ENCODE measurements at regions of chr11 and their contacts with region 1.

Region 1: DNA sequence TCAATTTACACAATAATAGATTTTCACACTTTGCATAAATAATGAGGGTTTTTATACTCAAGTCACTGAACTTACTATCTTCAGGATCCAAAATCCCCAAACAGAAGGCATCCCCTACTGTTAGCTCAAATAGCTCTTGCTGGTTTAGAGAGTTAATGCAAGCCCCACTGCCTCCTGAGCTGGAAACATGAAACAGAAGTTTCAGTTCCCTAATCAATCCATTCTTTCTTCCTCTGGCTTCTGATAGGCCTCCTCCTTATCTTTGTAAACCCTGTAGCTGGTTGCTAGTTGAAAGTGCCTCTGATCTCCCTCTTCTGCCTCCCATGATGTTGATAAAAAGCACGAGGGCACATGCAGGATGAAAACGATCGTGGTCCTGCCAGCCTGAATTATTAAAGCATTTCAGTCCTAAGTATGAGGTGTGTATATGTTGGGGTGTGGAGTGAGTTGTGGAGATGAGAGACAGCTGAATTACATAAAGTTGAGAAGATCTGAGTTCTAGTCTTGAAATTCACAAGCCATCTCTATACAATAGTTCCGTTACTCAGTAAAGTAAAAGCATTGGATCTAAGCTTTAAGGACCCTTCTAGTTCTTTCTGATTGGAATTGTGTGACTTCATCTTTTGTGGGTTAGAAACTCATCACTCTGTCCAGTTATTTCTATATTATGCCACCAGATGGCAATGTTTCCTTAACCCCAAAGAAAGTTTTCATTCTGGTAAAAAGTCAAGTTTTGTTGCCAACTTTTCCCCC is 35.0 kb upstream of the EHF start:
- DNase-seq: peak; percentile 38 to 71 (median 50)
- ATAC-seq: peak; percentile 70
- H3K4me3 ChIP-seq: no peak overlapping the region
- H3K27ac ChIP-seq: peak overlapping the region; percentile 44; the same call in 2 of the 3 replicates
- H3K4me1 ChIP-seq: peaks cover 0 to 40% of the 10 kb centered on the region in 2 experiments; a peak in 3 of 5 replicates
- H3K27me3 ChIP-seq: peaks cover 0 to 3% of the 10 kb centered on the region in 2 experiments; a peak in 3 of 5 replicates
- CTCF ChIP-seq: peak; percentile 59 to 83 (median 65); a peak in 5 of 6 replicates
- EP300 ChIP-seq: peak; percentile 17; the same call in 1 of the 2 replicates
- POLR2A ChIP-seq: no peak
- RAD21 ChIP-seq: peak; percentile 96 to 97

Region 2: GRCh38 chr11:34565417-34566207 is 20.3 kb before region 1 on chr11:
- CTCF ChIA-PET with region 1: no interaction called
- POLR2A ChIA-PET with region 1: interaction called, 3 read pairs
- in situ Hi-C with region 1: no loop called
- intact Hi-C with region 1: loop called (anchors 1 kb)
- DNase-seq: peak; percentile 52 to 62 (median 57)
- ATAC-seq: peak; percentile 88
- H3K4me3 ChIP-seq: no peak overlapping the region
- H3K27ac ChIP-seq: no peak overlapping the region
- H3K4me1 ChIP-seq: no peaks in the 10 kb centered on the region
- H3K27me3 ChIP-seq: peaks cover 2 to 9% of the 10 kb centered on the region in 2 experiments; a peak in 2 of 5 replicates
- CTCF ChIP-seq: peak; percentile 64 to 74 (median 69)
- EP300 ChIP-seq: no peak
- POLR2A ChIP-seq: no peak
- RAD21 ChIP-seq: peak; percentile 47 to 80

Region 3: GRCh38 chr11:34600339-34601084 is 14.6 kb after region 1 on chr11:
- CTCF ChIA-PET with region 1: interaction called, 3 read pairs
- POLR2A ChIA-PET with region 1: no interaction called
- in situ Hi-C with region 1: no loop called
- intact Hi-C with region 1: loop called (anchors 2 kb)
- DNase-seq: peak; percentile 86 to 93 (median 88)
- ATAC-seq: peak; percentile 82
- H3K4me3 ChIP-seq: no peak overlapping the region
- H3K27ac ChIP-seq: peak overlapping the region; percentile 71
- H3K4me1 ChIP-seq: peaks cover 41 to 63% of the 10 kb centered on the region in 2 experiments
- H3K27me3 ChIP-seq: no peaks in the 10 kb centered on the region
- CTCF ChIP-seq: peak in 1 of 3 experiments; percentile 10; a peak in 1 of 6 replicates
- EP300 ChIP-seq: peak; percentile 92
- POLR2A ChIP-seq: no peak
- RAD21 ChIP-seq: peak in 1 of 2 experiments; percentile 33; a peak in 1 of 4 replicates

Region 4: DNA sequence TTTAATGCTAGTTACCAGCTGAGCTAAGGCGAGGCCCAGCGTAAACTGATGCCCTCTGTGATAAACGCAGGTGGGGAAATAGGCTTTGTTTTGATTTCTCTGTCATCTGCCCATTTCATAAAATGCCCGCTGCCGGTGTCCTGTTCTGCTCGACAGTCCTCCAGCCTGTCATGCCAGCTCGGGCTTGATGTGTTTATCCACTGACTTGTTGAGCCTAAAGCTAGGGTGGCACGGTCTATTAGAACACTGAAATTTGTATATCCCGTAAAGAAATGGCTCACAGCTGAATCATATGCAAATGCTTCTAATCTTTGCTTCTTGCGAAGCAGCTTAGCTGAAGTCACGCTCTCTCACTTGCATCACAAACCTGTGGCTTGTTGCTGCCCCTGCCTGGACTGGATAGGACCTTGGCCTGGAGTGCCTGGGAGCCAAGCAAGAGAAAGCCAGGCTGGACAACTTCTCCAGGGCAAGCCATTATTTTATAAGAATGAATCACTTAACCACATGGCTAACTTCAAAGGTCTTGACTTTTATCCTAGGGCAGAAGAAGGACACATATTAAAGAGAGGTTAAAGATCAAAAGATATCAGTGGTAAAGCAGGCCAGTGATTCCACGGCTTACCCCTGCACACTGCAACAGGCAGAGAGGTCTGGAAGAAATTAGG is 68.0 kb after region 1 on chr11:
- CTCF ChIA-PET with region 1: interaction called, 3 read pairs
- POLR2A ChIA-PET with region 1: no interaction called
- in situ Hi-C with region 1: no loop called
- intact Hi-C with region 1: loop called (anchors 1 kb)
- DNase-seq: peak in 2 of 4 experiments; percentile 24 to 66
- ATAC-seq: peak; percentile 74
- H3K4me3 ChIP-seq: no peak overlapping the region
- H3K27ac ChIP-seq: no peak overlapping the region
- H3K4me1 ChIP-seq: peaks cover 0 to 45% of the 10 kb centered on the region in 2 experiments; a peak in 3 of 5 replicates
- H3K27me3 ChIP-seq: no peaks in the 10 kb centered on the region
- CTCF ChIP-seq: peak; percentile 31 to 55 (median 53); a peak in 5 of 6 replicates
- EP300 ChIP-seq: no peak
- POLR2A ChIP-seq: no peak
- RAD21 ChIP-seq: peak; percentile 58 to 70

Region 5: DNA sequence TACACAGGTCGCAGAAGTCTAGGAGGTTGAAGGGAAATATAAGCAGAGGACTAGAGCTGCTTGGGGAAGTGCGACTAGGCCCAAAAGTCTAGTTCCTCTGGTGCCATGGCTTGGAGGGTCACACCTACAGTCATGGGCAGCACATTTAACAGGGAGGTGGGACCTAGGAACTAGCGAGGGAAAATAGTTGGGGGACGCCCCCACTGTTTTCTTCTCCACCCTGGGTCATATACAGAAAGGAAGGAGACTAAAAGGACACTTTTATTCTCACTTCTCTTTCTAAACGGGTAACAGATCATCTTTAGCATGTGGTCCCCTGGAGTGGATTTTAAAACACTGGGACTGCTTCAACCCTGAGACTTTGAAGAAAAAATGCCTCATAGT is 313.7 kb after region 1 on chr11:
- CTCF ChIA-PET with region 1: interaction called, 16 read pairs
- POLR2A ChIA-PET with region 1: interaction called, 5 read pairs
- in situ Hi-C with region 1: loop called (anchors 5 kb)
- intact Hi-C with region 1: loop called (anchors 2 kb)
- DNase-seq: no peak
- ATAC-seq: peak; percentile 16; the same call in 2 of the 3 replicates
- H3K4me3 ChIP-seq: no peak overlapping the region
- H3K27ac ChIP-seq: no peak overlapping the region
- H3K4me1 ChIP-seq: no peaks in the 10 kb centered on the region; a peak in 1 of 5 replicates
- H3K27me3 ChIP-seq: no peaks in the 10 kb centered on the region
- CTCF ChIP-seq: no peak
- EP300 ChIP-seq: no peak
- POLR2A ChIP-seq: no peak
- RAD21 ChIP-seq: no peak

Region 6: DNA sequence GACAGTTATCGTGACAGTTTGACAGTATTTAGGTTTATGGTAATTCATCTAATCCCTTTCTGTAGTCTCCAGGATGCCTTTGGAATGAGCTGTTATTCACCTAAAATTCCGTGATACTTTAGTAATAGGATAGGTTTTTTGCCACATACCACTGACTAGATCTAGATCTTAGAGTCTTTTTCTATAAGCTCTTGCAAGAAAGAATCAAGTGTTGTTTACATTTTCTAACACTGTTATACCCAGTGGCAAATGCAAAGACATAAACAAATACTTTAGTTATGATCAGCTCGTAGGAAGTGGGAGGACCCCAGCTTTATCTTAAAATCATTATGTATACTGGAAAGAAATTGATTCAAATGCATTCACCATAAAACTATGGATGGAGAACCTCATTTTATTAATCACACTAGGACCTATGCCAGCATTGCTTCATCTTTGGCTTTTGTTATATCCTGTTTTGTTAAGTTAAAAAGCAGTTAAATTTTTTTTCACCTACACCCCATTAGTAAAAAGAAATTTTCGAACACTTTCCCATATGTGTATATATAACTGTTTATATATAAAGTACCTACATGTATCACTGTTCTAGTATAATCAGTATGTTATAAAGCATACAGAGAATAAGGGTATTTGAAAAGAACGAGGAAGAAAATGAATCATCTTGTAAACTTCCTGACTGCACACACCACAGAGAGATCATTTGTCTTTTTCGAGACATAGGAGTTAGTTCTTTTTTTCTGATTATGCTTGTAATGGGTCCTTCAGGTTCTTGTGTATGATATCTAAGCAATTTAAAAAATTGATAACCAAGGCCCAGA is 391.4 kb after region 1 on chr11:
- CTCF ChIA-PET with region 1: no interaction called
- POLR2A ChIA-PET with region 1: no interaction called
- in situ Hi-C with region 1: no loop called
- intact Hi-C with region 1: no loop called
- DNase-seq: no peak
- ATAC-seq: no peak
- H3K4me3 ChIP-seq: no peak overlapping the region
- H3K27ac ChIP-seq: no peak overlapping the region
- H3K4me1 ChIP-seq: no peaks in the 10 kb centered on the region
- H3K27me3 ChIP-seq: no peaks in the 10 kb centered on the region
- CTCF ChIP-seq: no peak
- EP300 ChIP-seq: no peak
- POLR2A ChIP-seq: no peak
- RAD21 ChIP-seq: no peak